Esophagus squamous epithelium (tissue), 5 donors: ENCODE measurements at regions of chr3 and their contacts with region 1.

Region 1: DNA sequence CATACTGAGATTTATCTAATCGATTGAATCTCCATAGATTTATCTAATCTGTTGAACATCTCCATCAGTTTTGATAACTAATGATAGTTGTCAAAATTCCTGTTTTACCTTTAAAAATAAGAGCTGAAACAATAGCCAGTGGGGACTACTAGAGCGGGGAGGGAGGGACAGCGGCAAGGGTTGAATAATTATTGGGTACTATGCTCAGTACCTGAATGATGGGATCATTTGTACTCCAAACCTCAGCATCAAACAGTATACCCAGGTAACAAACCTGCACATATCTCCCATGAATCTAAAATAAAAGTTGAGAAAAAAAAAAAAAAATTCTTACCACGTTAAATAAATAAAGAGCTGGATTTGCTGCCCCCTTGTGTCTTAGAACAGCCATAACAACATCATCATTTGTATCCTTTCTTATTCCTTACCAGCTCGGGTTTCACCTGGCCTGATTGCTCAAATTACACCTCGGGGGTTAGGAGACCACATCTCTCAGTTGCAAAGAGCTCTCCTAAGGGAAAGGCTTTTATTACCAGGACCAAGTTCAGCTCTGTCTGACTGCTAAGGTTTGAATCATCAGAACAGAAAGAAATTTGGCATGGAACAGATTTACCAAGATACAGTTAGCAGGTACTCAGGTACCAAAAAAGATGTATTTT is 25.7 kb upstream of the RPL39L start:
- DNase-seq: no peak
- H3K4me3 ChIP-seq: no peak overlapping the region
- H3K27ac ChIP-seq: no peak overlapping the region
- H3K4me1 ChIP-seq: peaks cover 0 to 11% (median 0%) of the 10 kb centered on the region in 3 donors
- H3K27me3 ChIP-seq: no peaks in the 10 kb centered on the region
- CTCF ChIP-seq: peak; percentile 36 to 75 (median 66)
- POLR2A ChIP-seq: no peak

Region 2: DNA sequence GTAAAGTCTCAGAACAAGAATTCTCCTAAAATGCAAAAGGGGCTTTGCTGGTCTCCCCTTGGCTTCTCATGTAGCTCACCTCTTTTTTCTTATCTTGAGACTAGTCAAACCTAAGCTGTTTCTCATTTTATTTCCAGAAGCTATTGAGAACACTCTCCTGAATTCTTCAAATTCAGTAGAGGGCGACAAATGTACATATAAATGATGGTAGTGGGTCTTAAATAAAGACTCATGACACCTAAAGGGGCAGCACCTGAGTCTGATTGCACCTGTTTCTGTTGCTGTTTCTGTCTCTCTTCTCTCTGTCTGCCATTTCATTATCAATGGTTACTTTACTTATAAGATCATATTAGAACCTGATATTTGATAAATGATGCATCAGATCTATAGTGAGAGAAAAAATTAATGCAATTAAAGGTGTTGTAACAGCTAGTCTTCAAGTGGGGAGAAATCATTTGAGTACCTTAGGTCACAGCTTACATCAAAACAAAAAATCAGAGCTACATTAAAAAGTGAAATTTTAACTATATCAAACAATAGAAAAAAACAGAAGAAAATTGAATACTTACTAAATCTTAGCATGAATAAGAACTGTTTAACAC is 315.5 kb before region 1 on chr3:
- intact Hi-C with region 1: loop called (anchors 10 kb)
- DNase-seq: no peak
- H3K4me3 ChIP-seq: no peak overlapping the region
- H3K27ac ChIP-seq: no peak overlapping the region
- H3K4me1 ChIP-seq: no peaks in the 10 kb centered on the region
- H3K27me3 ChIP-seq: peaks cover 0 to 55% (median 0%) of the 10 kb centered on the region in 4 donors
- CTCF ChIP-seq: peak in 4 of 6 experiments; percentile 11 to 46 (median 36)
- POLR2A ChIP-seq: no peak